Activated CD4-positive, alpha-beta memory T cell treated with anti-CD3 and anti-CD28 coated beads, Interleukin-2, amount 10 ng/mL, durations not matched to agents 7 days and 5 days (primary cell): ENCODE measurements at regions of chr12 and their contacts with region 1.

Region 1: DNA sequence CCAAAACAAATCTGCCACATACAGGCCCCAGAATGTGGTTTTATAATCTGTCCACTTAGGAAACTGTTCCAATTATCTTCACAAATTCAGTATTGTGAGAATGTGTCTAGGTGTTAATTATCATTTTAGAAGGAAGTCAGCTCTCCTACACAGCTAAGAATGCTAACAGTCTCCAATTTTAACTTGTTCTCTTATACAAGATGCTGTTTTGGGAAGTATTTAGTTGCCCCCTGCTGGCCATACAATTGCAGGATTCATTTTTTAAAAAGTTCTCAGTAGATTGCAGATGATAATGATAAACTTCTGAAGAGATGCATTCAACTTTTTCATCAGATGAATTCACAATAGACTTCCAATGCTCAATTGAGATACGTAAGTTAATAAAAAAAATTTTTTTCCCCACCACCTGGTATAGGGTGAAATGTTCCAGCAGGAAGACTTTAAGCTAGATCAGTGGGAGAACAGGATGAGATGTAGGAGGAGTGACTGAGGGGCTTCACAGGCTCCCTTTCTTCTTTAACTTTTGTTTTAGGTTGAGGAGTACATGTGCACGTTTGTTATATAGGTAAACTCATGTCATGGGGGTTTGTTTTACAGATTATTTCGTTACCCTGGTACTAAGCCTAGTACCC is 27.3 kb upstream of the OSBPL8 start:
- DNase-seq: peak; percentile 31
- H3K4me3 Mint-ChIP-seq: no peak overlapping the region
- H3K27ac Mint-ChIP-seq: no peak overlapping the region
- H3K4me1 Mint-ChIP-seq: peaks cover 19% of the 10 kb centered on the region
- H3K27me3 Mint-ChIP-seq: no peaks in the 10 kb centered on the region

Region 2: DNA sequence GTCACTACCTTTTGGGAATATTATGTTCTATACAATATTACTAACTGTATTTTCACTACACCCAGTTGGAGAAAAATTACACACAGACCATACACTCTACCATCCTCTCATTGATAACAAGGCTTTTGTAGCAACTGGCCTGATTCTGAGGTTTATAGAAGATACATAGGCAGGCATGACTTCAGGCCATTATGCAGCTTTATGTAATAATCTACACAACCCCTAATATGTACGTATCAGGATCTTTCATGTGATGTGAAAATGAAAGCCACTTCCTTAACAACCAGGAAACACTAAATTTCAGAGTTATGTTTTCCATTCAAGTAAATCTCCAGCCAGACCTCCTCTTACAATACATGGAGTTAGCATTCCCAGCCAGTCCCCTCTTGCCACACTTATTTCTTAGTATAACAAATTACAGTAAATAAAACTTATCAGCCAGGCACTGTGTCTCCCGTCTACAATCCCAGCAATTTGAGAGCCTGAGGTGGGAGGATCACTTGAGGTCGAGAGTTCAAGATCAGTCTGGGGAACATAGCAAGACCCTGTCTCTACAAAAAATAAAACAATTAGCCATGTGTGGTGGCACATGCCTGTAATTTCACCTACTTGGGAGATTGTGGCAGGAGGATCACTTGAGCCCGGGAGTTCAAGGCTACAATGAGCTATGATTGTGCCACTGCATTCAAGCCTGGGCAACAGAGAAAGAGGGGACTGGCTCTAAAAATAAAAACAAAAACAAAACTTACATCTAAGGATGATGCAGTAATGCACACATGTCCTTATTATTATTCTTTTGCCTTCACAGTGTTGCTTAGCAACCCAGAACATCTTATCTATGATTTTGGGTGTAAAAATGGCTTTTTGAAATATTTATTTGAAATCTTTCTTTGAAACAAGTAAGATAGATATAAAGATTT is 16.9 kb before region 1 on chr12:
- CTCF ChIA-PET with region 1: interaction called, 10 read pairs
- POLR2A ChIA-PET with region 1: no interaction called
- DNase-seq: no peak
- H3K4me3 Mint-ChIP-seq: no peak overlapping the region
- H3K27ac Mint-ChIP-seq: no peak overlapping the region
- H3K4me1 Mint-ChIP-seq: peaks cover 6% of the 10 kb centered on the region
- H3K27me3 Mint-ChIP-seq: no peaks in the 10 kb centered on the region